ENCODE measurements at regions of chr13 and their contacts with region 1.

Region 1: GRCh38 chr13:101098873-101099272 is 317.4 kb downstream of the NALCN start:
- DNase-seq: no peak
- ATAC-seq: no peak
- H3K4me3 ChIP-seq: no peak overlapping the region
- H3K27ac ChIP-seq: no peak overlapping the region
- H3K4me1 ChIP-seq: 0 out of 2 replicates have a peak, but pooled peaks cover 9% of the 10 kb centered on the region
- H3K27me3 ChIP-seq: peaks cover 1 to 7% of the 10 kb centered on the region in 2 experiments; a peak in 2 of 5 replicates
- CTCF ChIP-seq: no peak
- EP300 ChIP-seq: no peak
- POLR2A ChIP-seq: no peak
- RAD21 ChIP-seq: no peak

Region 2: GRCh38 chr13:100473087-100473486 is 625.8 kb before region 1 on chr13:
- CTCF ChIA-PET with region 1: no interaction called
- POLR2A ChIA-PET with region 1: no interaction called
- in situ Hi-C with region 1: no loop called
- intact Hi-C with region 1: no loop called
- DNase-seq: no peak
- ATAC-seq: no peak
- H3K4me3 ChIP-seq: no peak overlapping the region
- H3K27ac ChIP-seq: no peak overlapping the region
- H3K4me1 ChIP-seq: no peaks in the 10 kb centered on the region
- H3K27me3 ChIP-seq: no peaks in the 10 kb centered on the region
- CTCF ChIP-seq: no peak
- EP300 ChIP-seq: no peak
- POLR2A ChIP-seq: no peak
- RAD21 ChIP-seq: no peak

Region 3: GRCh38 chr13:100573121-100573520 is 525.8 kb before region 1 on chr13:
- CTCF ChIA-PET with region 1: no interaction called
- POLR2A ChIA-PET with region 1: no interaction called
- in situ Hi-C with region 1: loop called (anchors 25 kb)
- intact Hi-C with region 1: loop called (anchors 5 kb)
- DNase-seq: peak; percentile 77
- ATAC-seq: peak; percentile 96
- H3K4me3 ChIP-seq: no peak overlapping the region
- H3K27ac ChIP-seq: no peak overlapping the region
- H3K4me1 ChIP-seq: peaks cover 28% of the 10 kb centered on the region
- H3K27me3 ChIP-seq: no peaks in the 10 kb centered on the region
- CTCF ChIP-seq: peak; percentile 82
- EP300 ChIP-seq: no peak
- POLR2A ChIP-seq: no peak
- RAD21 ChIP-seq: 0 out of 2 replicates have a peak, but pooled peaks have one; percentile 22

Region 4: DNA sequence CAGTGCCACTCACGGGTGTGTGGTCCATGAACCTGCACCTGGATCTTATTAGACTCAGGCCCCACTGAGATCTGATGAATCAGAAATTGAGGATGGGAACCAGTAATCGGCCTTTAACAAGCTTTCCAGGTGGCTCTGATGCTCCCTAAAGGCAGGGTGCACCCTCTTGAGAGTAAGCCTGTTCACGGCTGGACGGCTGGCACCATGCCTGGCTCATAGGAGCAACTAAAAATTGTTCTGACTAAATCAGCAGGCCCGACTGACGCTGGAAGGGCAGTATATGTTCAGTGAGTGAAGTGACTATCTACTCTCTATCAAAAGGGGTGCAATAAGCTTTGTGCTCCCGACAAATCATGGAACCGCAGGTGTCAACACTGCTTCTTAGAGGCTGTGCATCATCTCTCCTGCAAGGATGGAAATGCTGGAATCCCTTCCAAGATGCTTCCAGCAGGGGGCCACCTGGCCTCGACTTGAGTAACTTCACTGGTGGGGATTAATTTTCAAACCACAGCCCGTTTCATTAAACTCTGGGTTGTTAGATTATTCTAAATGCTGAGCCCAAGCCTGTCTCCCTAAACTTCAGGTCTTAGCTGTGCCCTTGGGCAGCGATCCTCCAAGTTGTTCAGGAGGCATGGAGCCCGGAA is 452.7 kb before region 1 on chr13:
- CTCF ChIA-PET with region 1: interaction called, 4 read pairs
- POLR2A ChIA-PET with region 1: no interaction called
- in situ Hi-C with region 1: no loop called
- intact Hi-C with region 1: loop called (anchors 1 kb)
- DNase-seq: peak; percentile 28
- ATAC-seq: peak; percentile 85
- H3K4me3 ChIP-seq: no peak overlapping the region
- H3K27ac ChIP-seq: no peak overlapping the region
- H3K4me1 ChIP-seq: no peaks in the 10 kb centered on the region
- H3K27me3 ChIP-seq: no peaks in the 10 kb centered on the region
- CTCF ChIP-seq: peak; percentile 53
- EP300 ChIP-seq: no peak
- POLR2A ChIP-seq: no peak
- RAD21 ChIP-seq: peak; percentile 53; the same call in 1 of the 2 replicates

Region 5: DNA sequence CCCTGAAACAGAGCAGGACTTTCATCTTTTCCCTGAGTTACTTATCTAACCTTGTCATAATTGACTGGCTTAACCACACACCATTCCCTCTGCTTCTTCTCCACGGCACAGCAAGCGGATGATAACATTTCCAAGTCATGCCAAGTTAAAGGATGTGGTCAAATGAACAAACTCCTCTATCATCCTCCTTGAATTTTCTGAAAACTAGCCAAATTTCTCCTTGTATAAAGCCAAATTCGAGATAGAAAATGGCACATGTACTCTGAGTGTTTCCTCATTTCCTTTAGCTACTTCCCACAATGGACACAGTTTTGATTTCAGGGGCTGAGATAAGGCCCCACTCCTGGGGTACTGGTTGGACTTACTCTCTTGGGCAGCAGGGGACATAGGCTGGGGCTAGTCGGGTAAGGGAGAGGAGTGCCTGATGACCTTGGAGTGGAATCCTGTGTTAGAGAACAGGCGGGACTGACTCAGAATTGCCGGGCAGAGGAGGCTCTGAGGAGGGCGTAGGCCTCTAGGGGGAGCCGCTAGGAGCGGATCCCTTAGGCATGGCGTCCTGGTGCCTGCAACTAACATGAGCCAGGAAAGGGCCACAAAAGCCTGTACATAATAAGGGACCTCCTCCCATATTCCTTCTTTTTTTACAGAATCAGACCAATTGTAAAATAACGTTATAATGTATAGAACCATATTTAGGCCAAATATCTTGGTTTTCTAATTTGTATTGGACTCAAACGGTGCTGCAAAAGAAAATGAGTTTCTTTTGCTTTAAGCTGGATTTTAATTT is 404.0 kb before region 1 on chr13:
- CTCF ChIA-PET with region 1: no interaction called
- POLR2A ChIA-PET with region 1: no interaction called
- in situ Hi-C with region 1: loop called (anchors 25 kb)
- intact Hi-C with region 1: loop called (anchors 1 kb)
- DNase-seq: peak; percentile 55
- ATAC-seq: peak; percentile 100
- H3K4me3 ChIP-seq: peak overlapping the region in 1 of 3 experiments; percentile 42; a peak in 2 of 6 replicates
- H3K27ac ChIP-seq: no peak overlapping the region
- H3K4me1 ChIP-seq: peaks cover 12% of the 10 kb centered on the region
- H3K27me3 ChIP-seq: peaks cover 0 to 9% of the 10 kb centered on the region in 2 experiments; a peak in 1 of 5 replicates
- CTCF ChIP-seq: peak; percentile 83
- EP300 ChIP-seq: no peak
- POLR2A ChIP-seq: no peak
- RAD21 ChIP-seq: no peak

Region 6: GRCh38 chr13:101289764-101290163 is 190.9 kb after region 1 on chr13:
- CTCF ChIA-PET with region 1: no interaction called
- POLR2A ChIA-PET with region 1: no interaction called
- in situ Hi-C with region 1: no loop called
- intact Hi-C with region 1: no loop called
- DNase-seq: no peak
- ATAC-seq: no peak
- H3K4me3 ChIP-seq: no peak overlapping the region
- H3K27ac ChIP-seq: no peak overlapping the region
- H3K4me1 ChIP-seq: no peaks in the 10 kb centered on the region
- H3K27me3 ChIP-seq: no peaks in the 10 kb centered on the region
- CTCF ChIP-seq: no peak
- EP300 ChIP-seq: no peak
- POLR2A ChIP-seq: no peak
- RAD21 ChIP-seq: no peak